HEK293 (cell line): ENCODE measurements at regions of chr2 and their contacts with region 1.

Region 1: DNA sequence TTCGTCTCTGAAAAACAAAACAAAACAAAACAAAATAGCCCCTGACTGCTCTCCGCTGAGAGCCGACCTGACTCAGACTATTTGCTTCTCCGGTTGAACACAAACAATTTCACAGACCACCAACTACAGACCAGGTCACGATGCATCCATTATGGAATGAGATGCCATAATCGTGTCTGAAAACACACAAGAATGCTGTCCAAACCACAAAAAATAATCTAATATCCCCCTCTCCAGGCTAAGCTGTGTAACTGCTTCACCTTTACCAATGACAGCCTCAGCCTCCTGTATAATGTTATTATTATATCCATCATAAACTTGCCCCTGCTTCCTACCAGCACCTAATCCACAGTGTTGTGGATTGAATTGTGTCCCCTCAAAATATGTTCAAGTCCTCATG is 114.7 kb downstream of the DNAH6 start:
- H3K4me3 ChIP-seq: no peak overlapping the region
- H3K27ac ChIP-seq: no peak overlapping the region
- H3K4me1 ChIP-seq: no peaks in the 10 kb centered on the region
- CTCF ChIP-seq: peak; percentile 64

Region 2: GRCh38 chr2:84443477-84443876 is 187.6 kb before region 1 on chr2:
- CTCF ChIA-PET with region 1: no interaction called
- POLR2A ChIA-PET with region 1: no interaction called
- H3K4me3 ChIP-seq: no peak overlapping the region
- H3K27ac ChIP-seq: no peak overlapping the region
- H3K4me1 ChIP-seq: 0 out of 2 replicates have a peak, but pooled peaks cover 2% of the 10 kb centered on the region
- CTCF ChIP-seq: no peak

Region 3: DNA sequence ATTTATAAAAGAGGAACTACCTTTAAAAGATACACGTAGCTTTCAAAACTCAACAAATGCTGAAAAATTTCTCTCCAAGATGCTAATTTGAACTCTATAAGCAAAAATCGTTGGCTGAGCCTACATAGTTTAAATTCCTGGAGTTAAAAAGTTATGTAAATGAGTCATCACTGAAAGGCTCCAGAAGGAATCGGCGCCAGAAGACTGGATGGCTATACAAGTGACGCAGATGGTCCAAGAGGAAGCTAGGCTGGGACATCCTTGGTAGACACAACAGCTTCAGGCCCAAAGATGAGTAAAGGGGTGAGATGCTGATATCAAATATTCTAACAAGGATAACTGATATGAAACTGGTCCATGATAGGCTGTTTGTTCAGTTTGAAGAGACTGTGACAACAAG is 137.5 kb before region 1 on chr2:
- CTCF ChIA-PET with region 1: interaction called, 17 read pairs
- POLR2A ChIA-PET with region 1: no interaction called
- H3K4me3 ChIP-seq: no peak overlapping the region
- H3K27ac ChIP-seq: no peak overlapping the region
- H3K4me1 ChIP-seq: no peaks in the 10 kb centered on the region
- CTCF ChIP-seq: no peak

Region 4: DNA sequence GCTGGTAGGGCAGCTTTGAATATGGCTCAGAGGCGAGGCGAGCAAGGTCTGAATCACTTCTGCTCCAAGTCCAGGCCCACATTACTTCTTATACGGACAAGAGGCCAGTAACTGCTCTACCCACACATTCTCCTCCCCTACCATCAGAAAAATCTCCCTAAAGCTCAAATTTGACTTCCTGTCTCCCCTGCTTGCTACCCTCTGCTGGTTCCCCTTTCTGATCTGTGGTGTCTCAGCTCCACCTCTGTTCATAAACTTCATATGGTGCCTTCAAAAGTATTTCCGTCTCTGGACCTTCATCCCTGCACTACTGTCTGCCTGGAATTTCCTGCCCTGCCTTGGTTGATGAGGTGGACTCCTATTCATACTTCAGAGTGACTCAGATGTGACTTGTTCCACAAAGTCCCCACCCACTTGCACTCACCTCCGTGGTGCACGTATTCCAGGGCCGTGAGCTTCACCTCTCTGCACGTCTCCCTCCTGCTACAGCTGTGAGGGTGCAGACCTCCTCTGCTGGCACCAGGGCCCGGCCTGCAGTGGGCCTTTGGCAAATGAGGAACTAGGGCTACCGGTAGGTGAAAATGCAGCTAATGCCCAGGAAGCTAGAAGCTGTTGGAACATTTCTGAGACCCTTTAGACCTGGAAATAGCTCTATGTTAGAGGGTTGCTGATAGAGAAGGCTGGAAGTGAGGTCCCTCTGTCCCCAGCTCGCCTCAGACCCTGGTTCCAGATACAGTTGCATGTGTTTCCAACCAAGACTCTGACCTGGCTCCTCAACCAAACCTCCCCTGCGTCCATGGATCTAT is 315.4 kb after region 1 on chr2:
- CTCF ChIA-PET with region 1: no interaction called
- POLR2A ChIA-PET with region 1: no interaction called
- H3K4me3 ChIP-seq: no peak overlapping the region
- H3K27ac ChIP-seq: no peak overlapping the region
- H3K4me1 ChIP-seq: no peaks in the 10 kb centered on the region
- CTCF ChIP-seq: no peak